ENCODE measurements at regions of chr10 and their contacts with region 1.

Region 1: GRCh38 chr10:71963756-71964668 is at the start of gene CHST3:
- DNase-seq: no peak
- ATAC-seq: peak; percentile 81
- H3K4me3 ChIP-seq: peak within 1 kb of the TSS; percentile 78 to 95 (median 89)
- H3K27ac ChIP-seq: peak within 1 kb of the TSS; percentile 86
- H3K4me1 ChIP-seq: peaks cover 52% of the 10 kb centered on the region
- H3K27me3 ChIP-seq: peaks cover 0 to 4% of the 10 kb centered on the region in 2 experiments; a peak in 1 of 5 replicates
- CTCF ChIP-seq: no peak
- EP300 ChIP-seq: no peak
- POLR2A ChIP-seq: peak; percentile 7 to 15; a peak in 1 of 4 replicates
- RAD21 ChIP-seq: no peak
- total RNA-seq, gene CHST3: 13.4 and 18.7 TPM in 2 replicates

Region 2: DNA sequence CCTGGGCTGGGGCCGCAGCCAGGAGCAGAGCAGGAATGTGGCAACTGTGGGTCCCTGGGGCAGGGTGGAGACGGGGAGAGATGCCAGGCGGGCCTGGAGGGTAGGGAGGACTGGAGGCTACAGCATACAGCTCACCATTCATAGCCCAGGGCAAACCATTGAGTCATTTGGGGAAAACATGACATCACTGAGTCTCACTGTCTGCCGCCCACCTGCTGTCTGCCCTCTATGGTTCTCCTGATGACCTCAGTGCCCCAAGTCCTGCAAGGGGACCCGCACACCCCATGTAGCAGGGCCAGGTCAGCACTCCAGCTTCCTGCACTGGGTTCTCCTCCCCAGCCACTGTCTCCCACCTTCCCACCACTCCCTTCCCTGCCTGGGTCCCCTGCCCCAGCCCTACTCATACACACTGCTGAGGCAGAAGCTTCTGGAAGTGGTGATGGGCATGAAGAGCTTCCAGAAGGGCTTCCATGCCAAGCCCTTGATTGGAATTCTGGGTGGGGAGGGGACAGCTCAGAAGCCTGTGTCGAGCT is 10.5 kb after region 1 on chr10:
- CTCF ChIA-PET with region 1: no interaction called
- POLR2A ChIA-PET with region 1: interaction called, 27 read pairs
- in situ Hi-C with region 1: no loop called
- intact Hi-C with region 1: no loop called
- DNase-seq: no peak
- ATAC-seq: no peak
- H3K4me3 ChIP-seq: no peak overlapping the region
- H3K27ac ChIP-seq: peak overlapping the region; percentile 91
- H3K4me1 ChIP-seq: peaks cover 71% of the 10 kb centered on the region
- H3K27me3 ChIP-seq: no peaks in the 10 kb centered on the region
- CTCF ChIP-seq: no peak
- EP300 ChIP-seq: no peak
- POLR2A ChIP-seq: no peak
- RAD21 ChIP-seq: no peak

Region 3: GRCh38 chr10:71985542-71986250 is 21.7 kb after region 1 on chr10:
- CTCF ChIA-PET with region 1: no interaction called
- POLR2A ChIA-PET with region 1: interaction called, 15 read pairs
- in situ Hi-C with region 1: no loop called
- intact Hi-C with region 1: loop called (anchors 2 kb)
- DNase-seq: no peak
- ATAC-seq: no peak
- H3K4me3 ChIP-seq: peak overlapping the region in 1 of 3 experiments; percentile 41; a peak in 1 of 6 replicates
- H3K27ac ChIP-seq: peak overlapping the region; percentile 88
- H3K4me1 ChIP-seq: peaks cover 86% of the 10 kb centered on the region
- H3K27me3 ChIP-seq: no peaks in the 10 kb centered on the region
- CTCF ChIP-seq: no peak
- EP300 ChIP-seq: no peak
- POLR2A ChIP-seq: no peak
- RAD21 ChIP-seq: no peak

Region 4: DNA sequence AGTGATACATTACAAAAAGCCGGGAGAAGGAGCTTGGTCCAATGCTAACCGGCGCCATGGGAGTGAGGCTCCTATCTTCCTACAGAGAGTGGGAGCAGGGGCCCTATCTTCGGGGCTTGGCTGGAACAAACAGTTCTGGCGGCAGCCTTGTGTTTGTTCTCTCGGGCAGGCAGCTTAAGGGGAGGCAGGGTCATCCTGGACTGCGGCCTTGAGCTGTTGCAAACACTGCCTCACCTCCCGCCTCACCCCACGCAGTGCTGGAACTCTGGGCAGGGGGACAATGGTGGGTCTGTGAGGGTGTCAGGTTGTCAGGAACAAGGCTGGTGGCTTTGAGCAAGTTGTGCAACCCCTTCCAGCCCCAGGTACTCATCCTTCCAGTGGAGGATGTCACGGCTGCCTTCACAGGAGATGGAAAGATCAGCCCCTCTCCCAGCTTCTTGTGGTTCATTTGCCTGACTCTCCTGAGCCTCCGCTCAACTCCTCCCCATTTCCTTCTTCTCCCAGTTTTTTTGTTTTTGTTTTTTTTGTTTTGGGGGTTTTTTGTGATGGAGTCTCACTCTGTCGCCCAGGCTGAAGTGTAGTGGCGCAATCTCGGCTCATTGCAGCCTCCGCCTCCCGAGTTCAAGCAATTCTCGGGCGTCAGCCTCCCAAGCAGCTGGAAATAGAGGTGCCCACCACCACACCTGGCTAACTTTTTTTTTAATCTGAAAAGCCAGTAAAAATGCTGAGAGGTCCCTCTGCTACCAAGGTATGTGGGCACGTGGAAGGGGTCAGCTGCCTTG is 66.9 kb after region 1 on chr10:
- CTCF ChIA-PET with region 1: no interaction called
- POLR2A ChIA-PET with region 1: interaction called, 29 read pairs
- in situ Hi-C with region 1: no loop called
- intact Hi-C with region 1: no loop called
- DNase-seq: peak; percentile 97
- ATAC-seq: peak; percentile 89
- H3K4me3 ChIP-seq: peak overlapping the region; percentile 45 to 66 (median 58); a peak in 5 of 6 replicates
- H3K27ac ChIP-seq: peak overlapping the region; percentile 99
- H3K4me1 ChIP-seq: peaks cover 99% of the 10 kb centered on the region
- H3K27me3 ChIP-seq: no peaks in the 10 kb centered on the region
- CTCF ChIP-seq: peak; percentile 29; the same call in 1 of the 2 replicates
- EP300 ChIP-seq: peak; percentile 97 to 99
- POLR2A ChIP-seq: peak; percentile 65 to 82
- RAD21 ChIP-seq: peak; percentile 49; the same call in 1 of the 2 replicates

Region 5: GRCh38 chr10:72038458-72039001 is 74.5 kb after region 1 on chr10:
- CTCF ChIA-PET with region 1: no interaction called
- POLR2A ChIA-PET with region 1: interaction called, 10 read pairs
- in situ Hi-C with region 1: no loop called
- intact Hi-C with region 1: no loop called
- DNase-seq: peak; percentile 94
- ATAC-seq: peak; percentile 32
- H3K4me3 ChIP-seq: no peak overlapping the region; a peak in 1 of 6 replicates
- H3K27ac ChIP-seq: peak overlapping the region; percentile 74
- H3K4me1 ChIP-seq: peaks cover 93% of the 10 kb centered on the region
- H3K27me3 ChIP-seq: no peaks in the 10 kb centered on the region
- CTCF ChIP-seq: peak; percentile 13; the same call in 1 of the 2 replicates
- EP300 ChIP-seq: peak; percentile 75 to 96
- POLR2A ChIP-seq: no peak
- RAD21 ChIP-seq: no peak

Measured in HepG2 (cell line).